ENCODE measurements at regions of chr12 and their contacts with region 1.

Region 1: GRCh38 chr12:49358483-49359141 is 8.7 kb upstream of the SPATS2 start:
- DNase-seq: no peak
- ATAC-seq: peak; percentile 83
- H3K4me3 ChIP-seq: no peak overlapping the region
- H3K27ac ChIP-seq: no peak overlapping the region
- H3K4me1 ChIP-seq: no peaks in the 10 kb centered on the region
- H3K27me3 ChIP-seq: no peaks in the 10 kb centered on the region

Region 2: GRCh38 chr12:49403971-49404450 is 45.4 kb after region 1 on chr12:
- intact Hi-C with region 1: no loop called
- DNase-seq: no peak
- ATAC-seq: no peak
- H3K4me3 ChIP-seq: no peak overlapping the region
- H3K27ac ChIP-seq: no peak overlapping the region
- H3K4me1 ChIP-seq: no peaks in the 10 kb centered on the region
- H3K27me3 ChIP-seq: no peaks in the 10 kb centered on the region

Region 3: GRCh38 chr12:49515266-49515665 is 156.7 kb after region 1 on chr12:
- intact Hi-C with region 1: loop called (anchors 2 kb)
- DNase-seq: no peak
- ATAC-seq: no peak
- H3K4me3 ChIP-seq: no peak overlapping the region
- H3K27ac ChIP-seq: no peak overlapping the region
- H3K4me1 ChIP-seq: no peaks in the 10 kb centered on the region
- H3K27me3 ChIP-seq: no peaks in the 10 kb centered on the region

Measured in aorta (tissue), 5 donors.